ENCODE measurements at regions of chr4 and their contacts with region 1.

Region 1: GRCh38 chr4:139295206-139295941 is 5.9 kb upstream of the NAA15 start:
- DNase-seq: peak; percentile 98
- H3K4me3 ChIP-seq: peak overlapping the region; percentile 67 to 86 (median 73)
- H3K27ac ChIP-seq: peak overlapping the region; percentile 86 to 92 (median 88)
- H3K4me1 ChIP-seq: peaks cover 8 to 31% (median 12%) of the 10 kb centered on the region in 4 donors
- H3K27me3 ChIP-seq: no peaks in the 10 kb centered on the region
- CTCF ChIP-seq: peak; percentile 95 to 98 (median 96)
- EP300 ChIP-seq: no peak
- POLR2A ChIP-seq: peak; percentile 61

Region 2: GRCh38 chr4:139030614-139031235 is 264.6 kb before region 1 on chr4:
- in situ Hi-C with region 1: loop called in 1 of 4 experiments (anchors 10 kb)
- intact Hi-C with region 1: no loop called
- DNase-seq: peak; percentile 76
- H3K4me3 ChIP-seq: no peak overlapping the region
- H3K27ac ChIP-seq: no peak overlapping the region
- H3K4me1 ChIP-seq: peaks cover 0 to 8% (median 0%) of the 10 kb centered on the region in 4 donors
- H3K27me3 ChIP-seq: no peaks in the 10 kb centered on the region
- CTCF ChIP-seq: peak; percentile 77 to 82 (median 79)
- EP300 ChIP-seq: no peak
- POLR2A ChIP-seq: no peak

Region 3: GRCh38 chr4:139083956-139084803 is 211.2 kb before region 1 on chr4:
- in situ Hi-C with region 1: loop called in 1 of 4 experiments (anchors 25 kb)
- intact Hi-C with region 1: no loop called
- DNase-seq: peak; percentile 90
- H3K4me3 ChIP-seq: peak overlapping the region; percentile 64 to 86 (median 76)
- H3K27ac ChIP-seq: peak overlapping the region; percentile 94 to 100 (median 98)
- H3K4me1 ChIP-seq: peaks cover 0 to 37% (median 19%) of the 10 kb centered on the region in 4 donors
- H3K27me3 ChIP-seq: no peaks in the 10 kb centered on the region
- CTCF ChIP-seq: peak in 3 of 5 experiments; percentile 15 to 22 (median 20)
- EP300 ChIP-seq: no peak
- POLR2A ChIP-seq: peak; percentile 84

Region 4: GRCh38 chr4:139099366-139099982 is 195.9 kb before region 1 on chr4:
- in situ Hi-C with region 1: loop called in 2 of 4 experiments (anchors 10 to 25 kb)
- intact Hi-C with region 1: loop called (anchors 2 kb)
- DNase-seq: peak; percentile 71
- H3K4me3 ChIP-seq: no peak overlapping the region
- H3K27ac ChIP-seq: no peak overlapping the region
- H3K4me1 ChIP-seq: no peaks in the 10 kb centered on the region
- H3K27me3 ChIP-seq: no peaks in the 10 kb centered on the region
- CTCF ChIP-seq: peak; percentile 71 to 85 (median 78)
- EP300 ChIP-seq: no peak
- POLR2A ChIP-seq: no peak

Region 5: GRCh38 chr4:139108567-139109128 is 186.7 kb before region 1 on chr4:
- in situ Hi-C with region 1: loop called in 1 of 4 experiments (anchors 10 kb)
- intact Hi-C with region 1: no loop called
- DNase-seq: no peak
- H3K4me3 ChIP-seq: no peak overlapping the region
- H3K27ac ChIP-seq: no peak overlapping the region
- H3K4me1 ChIP-seq: no peaks in the 10 kb centered on the region
- H3K27me3 ChIP-seq: no peaks in the 10 kb centered on the region
- CTCF ChIP-seq: no peak
- EP300 ChIP-seq: no peak
- POLR2A ChIP-seq: no peak

Region 6: GRCh38 chr4:139229534-139230039 is 65.8 kb before region 1 on chr4:
- in situ Hi-C with region 1: loop called in 2 of 4 experiments (anchors 5 to 10 kb)
- intact Hi-C with region 1: no loop called
- DNase-seq: no peak
- H3K4me3 ChIP-seq: no peak overlapping the region
- H3K27ac ChIP-seq: no peak overlapping the region
- H3K4me1 ChIP-seq: peaks cover 0 to 3% (median 0%) of the 10 kb centered on the region in 4 donors
- H3K27me3 ChIP-seq: no peaks in the 10 kb centered on the region
- CTCF ChIP-seq: peak; percentile 65 to 79 (median 74)
- EP300 ChIP-seq: no peak
- POLR2A ChIP-seq: no peak

Region 7: DNA sequence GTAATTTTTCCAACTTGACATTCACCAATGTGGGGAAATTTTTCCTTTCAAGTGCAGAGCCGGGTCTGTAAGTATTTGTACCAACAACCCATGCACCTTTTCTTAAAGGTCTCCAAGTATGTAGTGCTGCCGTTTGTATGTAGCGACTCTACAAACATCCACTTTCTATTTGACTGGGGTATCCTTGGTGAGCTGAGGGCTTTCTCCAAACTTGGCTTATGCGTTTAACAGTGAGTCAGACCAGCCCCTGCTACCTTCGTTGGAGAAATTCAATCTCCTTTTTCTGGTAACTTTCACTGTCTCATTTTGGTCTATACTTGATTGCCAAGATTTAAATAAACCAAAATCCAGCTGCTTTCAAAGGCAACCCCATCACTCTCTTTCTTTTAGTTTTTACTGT is 405.2 kb after region 1 on chr4:
- in situ Hi-C with region 1: no loop called
- intact Hi-C with region 1: no loop called
- DNase-seq: no peak
- H3K4me3 ChIP-seq: no peak overlapping the region
- H3K27ac ChIP-seq: no peak overlapping the region
- H3K4me1 ChIP-seq: no peaks in the 10 kb centered on the region
- H3K27me3 ChIP-seq: no peaks in the 10 kb centered on the region
- CTCF ChIP-seq: no peak
- EP300 ChIP-seq: no peak
- POLR2A ChIP-seq: no peak